ENCODE measurements at regions of chr9 and their contacts with region 1.

Region 1: GRCh38 chr9:106921341-106921899 is 58.5 kb downstream of the ZNF462 start:
- DNase-seq: no peak
- ATAC-seq: peak; percentile 92

Region 2: GRCh38 chr9:106869458-106869857 is 52.0 kb before region 1 on chr9:
- intact Hi-C with region 1: loop called (anchors 2 kb)
- DNase-seq: no peak
- ATAC-seq: peak; percentile 58

Region 3: DNA sequence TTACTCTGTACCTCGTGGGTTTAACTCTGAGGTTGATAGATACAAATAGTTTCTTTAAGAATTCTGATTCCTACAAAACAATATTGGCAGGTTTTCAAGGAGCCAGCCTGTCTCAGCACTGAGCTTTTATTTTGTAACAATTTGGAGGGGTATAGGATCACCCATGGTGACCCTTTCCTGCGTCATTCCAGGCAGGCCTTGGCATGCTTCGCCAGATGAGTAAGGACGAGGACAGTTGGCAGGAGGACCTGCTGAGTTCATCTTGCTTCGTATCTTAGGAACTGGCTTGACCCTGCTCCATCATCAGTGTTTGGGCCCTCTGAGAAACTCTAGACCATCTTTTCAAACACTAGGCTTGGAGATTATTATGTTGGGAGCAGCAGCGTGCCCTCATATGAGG is 40.6 kb before region 1 on chr9:
- intact Hi-C with region 1: loop called (anchors 2 kb)
- DNase-seq: peak; percentile 54
- ATAC-seq: no peak

Region 4: DNA sequence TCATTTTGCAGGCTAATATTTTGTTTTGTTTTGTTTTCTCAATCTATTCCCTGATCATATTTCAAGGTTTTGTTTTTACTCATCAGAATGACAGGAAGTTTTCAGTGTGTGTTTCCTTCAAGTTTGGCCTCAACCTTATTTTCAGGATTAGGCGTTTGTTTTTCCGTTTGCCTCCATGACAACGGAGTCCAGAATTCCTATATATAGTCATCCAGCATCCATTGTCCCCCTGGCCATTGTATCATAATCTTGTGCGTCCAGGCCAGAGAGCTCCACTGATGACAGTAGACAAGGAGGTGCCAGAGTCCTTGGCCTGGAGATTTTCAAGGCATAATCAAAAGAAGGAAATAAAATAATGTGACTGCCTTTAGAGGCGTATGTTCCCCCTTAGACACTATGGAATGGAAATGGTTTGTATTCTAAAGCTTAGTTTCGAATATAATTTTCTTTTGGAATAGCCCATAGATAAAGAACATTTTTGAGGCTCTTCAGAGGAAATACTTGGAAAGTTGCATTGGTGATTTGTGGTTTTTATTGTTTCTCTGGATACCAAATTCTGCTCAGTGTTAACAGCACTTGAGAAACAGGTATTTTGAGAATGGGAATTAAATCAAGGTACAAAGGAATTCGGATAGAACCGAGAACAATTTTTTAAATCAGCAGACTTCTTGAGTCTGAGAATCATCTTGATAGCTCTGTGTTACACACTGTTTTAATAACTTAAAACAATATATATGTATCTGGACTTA is 41.4 kb after region 1 on chr9:
- intact Hi-C with region 1: loop called (anchors 5 kb)
- DNase-seq: no peak
- ATAC-seq: peak; percentile 68

Measured in Right ventricle myocardium inferior (tissue), 1 donor.